CD4-positive, alpha-beta memory T cell (primary cell): ENCODE measurements at regions of chr12 and their contacts with region 1.

Region 1: DNA sequence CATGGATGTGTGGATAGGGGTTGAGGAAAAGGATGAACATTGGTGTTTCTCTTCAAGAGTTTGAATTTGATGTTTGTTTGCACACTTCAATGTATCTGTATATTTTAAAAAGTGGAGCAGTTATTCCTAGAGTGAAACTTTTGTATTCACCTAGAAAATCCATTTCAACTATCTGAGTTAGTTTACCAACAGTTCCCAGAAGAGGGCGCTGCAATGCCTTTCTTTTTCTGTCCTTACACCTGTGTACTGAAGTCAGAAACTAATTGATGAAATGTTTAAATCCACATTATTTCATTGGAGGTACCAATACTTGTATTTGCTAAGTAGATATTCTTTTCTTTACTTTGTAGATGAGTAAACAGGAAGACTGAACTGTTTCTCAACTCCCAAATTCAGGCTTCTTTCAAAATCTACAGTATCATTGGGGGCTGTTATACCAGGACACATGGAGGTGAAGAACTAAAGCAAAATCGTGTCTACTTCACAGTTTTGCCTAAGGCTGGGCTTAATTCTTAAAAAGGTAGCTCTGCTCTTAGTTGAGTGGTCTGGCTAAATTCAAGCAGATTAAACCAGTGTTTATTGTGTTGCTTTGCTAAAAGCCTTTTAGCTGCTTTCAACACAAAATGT is 26.6 kb upstream of the KLRB1 start:
- DNase-seq: peak; percentile 76 to 77 (median 77)
- H3K4me3 ChIP-seq: no peak overlapping the region
- H3K4me3 Mint-ChIP-seq: peak overlapping the region in 6 of 8 donors; percentile 51 to 80 (median 61)
- H3K27ac ChIP-seq: no peak overlapping the region
- H3K27ac Mint-ChIP-seq: peak overlapping the region; percentile 22 to 97 (median 91)
- H3K4me1 ChIP-seq: peaks cover 70% of the 10 kb centered on the region
- H3K4me1 Mint-ChIP-seq: peaks cover 47 to 92% (median 73%) of the 10 kb centered on the region in 4 donors
- H3K27me3 ChIP-seq: no peaks in the 10 kb centered on the region
- H3K27me3 Mint-ChIP-seq: no peaks in the 10 kb centered on the region

Region 2: GRCh38 chr12:9163392-9163791 is 470.9 kb before region 1 on chr12:
- CTCF ChIA-PET with region 1: no interaction called
- POLR2A ChIA-PET with region 1: no interaction called
- intact Hi-C with region 1: no loop called
- DNase-seq: no peak
- H3K4me3 ChIP-seq: no peak overlapping the region
- H3K4me3 Mint-ChIP-seq: no peak overlapping the region
- H3K27ac ChIP-seq: no peak overlapping the region
- H3K27ac Mint-ChIP-seq: no peak overlapping the region
- H3K4me1 ChIP-seq: no peaks in the 10 kb centered on the region
- H3K4me1 Mint-ChIP-seq: peaks cover 0 to 2% (median under 1%) of the 10 kb centered on the region in 4 donors
- H3K27me3 ChIP-seq: no peaks in the 10 kb centered on the region
- H3K27me3 Mint-ChIP-seq: no peaks in the 10 kb centered on the region

Region 3: DNA sequence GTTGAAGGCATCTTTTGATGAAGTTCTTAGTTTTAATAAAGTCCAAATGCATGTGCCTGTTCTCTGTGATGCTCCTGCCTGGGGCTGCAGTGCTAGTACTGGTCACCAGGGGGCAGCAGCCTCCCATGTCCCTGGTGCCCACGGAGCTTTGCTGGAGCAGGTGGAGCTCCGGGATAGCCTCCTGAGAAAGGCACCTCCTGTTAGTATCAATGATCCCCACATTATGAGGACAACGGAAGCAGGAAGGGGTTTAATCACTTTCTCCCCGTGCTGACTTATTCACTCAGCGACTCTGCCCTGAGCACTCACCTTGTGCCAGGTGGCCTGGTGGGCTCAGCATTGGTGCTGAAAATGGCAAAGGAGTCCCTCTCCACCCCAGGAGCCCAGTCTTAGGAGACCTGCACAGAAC is 303.1 kb before region 1 on chr12:
- CTCF ChIA-PET with region 1: interaction called, 3 read pairs
- POLR2A ChIA-PET with region 1: no interaction called
- intact Hi-C with region 1: loop called (anchors 5 kb)
- DNase-seq: peak in 4 of 5 donors; percentile 54 to 64 (median 61)
- H3K4me3 ChIP-seq: no peak overlapping the region
- H3K4me3 Mint-ChIP-seq: peak overlapping the region in 1 of 8 donors; percentile 45
- H3K27ac ChIP-seq: no peak overlapping the region
- H3K27ac Mint-ChIP-seq: peak overlapping the region in 2 of 7 donors; percentile 37 to 76
- H3K4me1 ChIP-seq: peaks cover 5% of the 10 kb centered on the region
- H3K4me1 Mint-ChIP-seq: peaks cover 5 to 22% (median 10%) of the 10 kb centered on the region in 4 donors
- H3K27me3 ChIP-seq: no peaks in the 10 kb centered on the region
- H3K27me3 Mint-ChIP-seq: no peaks in the 10 kb centered on the region

Region 4: GRCh38 chr12:9464408-9464807 is 169.9 kb before region 1 on chr12:
- CTCF ChIA-PET with region 1: interaction called, 15 read pairs
- POLR2A ChIA-PET with region 1: no interaction called
- intact Hi-C with region 1: no loop called
- DNase-seq: no peak
- H3K4me3 ChIP-seq: no peak overlapping the region
- H3K4me3 Mint-ChIP-seq: no peak overlapping the region
- H3K27ac ChIP-seq: no peak overlapping the region
- H3K27ac Mint-ChIP-seq: no peak overlapping the region
- H3K4me1 ChIP-seq: peaks cover 10% of the 10 kb centered on the region
- H3K4me1 Mint-ChIP-seq: peaks cover 7 to 15% (median 12%) of the 10 kb centered on the region in 4 donors
- H3K27me3 ChIP-seq: no peaks in the 10 kb centered on the region
- H3K27me3 Mint-ChIP-seq: no peaks in the 10 kb centered on the region

Region 5: GRCh38 chr12:9615420-9616136 is 18.7 kb before region 1 on chr12:
- CTCF ChIA-PET with region 1: interaction called, 12 read pairs
- POLR2A ChIA-PET with region 1: interaction called, 19 read pairs
- intact Hi-C with region 1: loop called (anchors 2 kb)
- DNase-seq: peak; percentile 39 to 85 (median 76)
- H3K4me3 ChIP-seq: peak overlapping the region in 1 of 2 donors; percentile 46
- H3K4me3 Mint-ChIP-seq: peak overlapping the region; percentile 80 to 94 (median 88)
- H3K27ac ChIP-seq: peak overlapping the region; percentile 84
- H3K27ac Mint-ChIP-seq: peak overlapping the region; percentile 95 to 100 (median 98)
- H3K4me1 ChIP-seq: peaks cover 63% of the 10 kb centered on the region
- H3K4me1 Mint-ChIP-seq: peaks cover 61 to 97% (median 75%) of the 10 kb centered on the region in 4 donors
- H3K27me3 ChIP-seq: no peaks in the 10 kb centered on the region
- H3K27me3 Mint-ChIP-seq: no peaks in the 10 kb centered on the region

Region 6: GRCh38 chr12:9687228-9687627 is 52.9 kb after region 1 on chr12:
- CTCF ChIA-PET with region 1: interaction called, 10 read pairs
- POLR2A ChIA-PET with region 1: interaction called, 3 read pairs
- intact Hi-C with region 1: no loop called
- DNase-seq: peak in 1 of 5 donors; percentile 50
- H3K4me3 ChIP-seq: no peak overlapping the region
- H3K4me3 Mint-ChIP-seq: peak overlapping the region in 5 of 8 donors; percentile 10 to 54 (median 44)
- H3K27ac ChIP-seq: no peak overlapping the region
- H3K27ac Mint-ChIP-seq: peak overlapping the region in 6 of 7 donors; percentile 29 to 83 (median 64)
- H3K4me1 ChIP-seq: peaks cover 73% of the 10 kb centered on the region
- H3K4me1 Mint-ChIP-seq: peaks cover 45 to 72% (median 65%) of the 10 kb centered on the region in 4 donors
- H3K27me3 ChIP-seq: no peaks in the 10 kb centered on the region
- H3K27me3 Mint-ChIP-seq: no peaks in the 10 kb centered on the region